ENCODE measurements at regions of chr18 and their contacts with region 1.

Region 1: DNA sequence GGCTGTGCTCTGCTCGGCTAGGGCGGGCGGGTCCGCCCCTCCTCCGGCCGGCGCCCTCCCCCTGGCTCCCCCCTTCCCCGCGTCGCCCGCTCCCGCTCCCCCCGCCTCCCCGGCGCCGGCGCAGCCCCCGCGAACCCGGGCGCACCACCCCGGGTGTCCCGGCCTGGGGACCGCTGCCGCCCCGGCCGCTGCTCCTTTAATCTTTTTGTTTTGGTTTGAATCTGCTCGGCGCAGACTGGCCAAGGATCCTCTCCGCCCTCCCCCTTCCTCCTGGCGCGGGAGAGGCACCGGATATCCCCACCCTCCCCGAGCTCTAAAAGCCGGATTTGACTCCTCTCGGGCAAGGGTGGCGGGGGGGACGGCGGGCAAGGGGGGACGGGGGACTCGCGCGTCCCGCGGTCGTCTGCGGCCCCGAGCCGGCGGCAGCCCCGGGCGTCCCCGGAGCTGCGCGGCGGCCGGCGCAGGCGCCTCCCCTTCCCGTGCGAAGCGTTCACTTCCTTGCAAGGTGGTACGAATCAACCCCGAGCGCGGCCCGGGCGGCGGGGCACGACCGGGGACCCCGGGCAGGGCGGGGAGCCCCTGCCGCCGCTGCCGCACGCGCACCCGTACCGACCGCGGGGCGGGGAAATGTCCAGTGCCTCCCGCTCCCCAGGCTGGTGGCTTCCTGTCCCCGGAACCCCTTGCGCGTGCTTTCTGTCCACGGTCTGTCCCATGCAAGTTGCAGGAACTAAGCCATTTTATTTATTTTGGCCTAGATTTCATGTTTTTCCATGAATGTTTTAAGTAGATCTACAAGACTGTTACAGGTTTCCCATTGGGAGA is at the start of gene PTGR3:
- DNase-seq: peak; percentile 91
- H3K4me3 Mint-ChIP-seq: peak within 1 kb of the TSS; percentile 99
- H3K27ac Mint-ChIP-seq: peak within 1 kb of the TSS; percentile 98
- H3K4me1 Mint-ChIP-seq: peaks cover 56% of the 10 kb centered on the region
- H3K27me3 Mint-ChIP-seq: no peaks in the 10 kb centered on the region
- total RNA-seq, gene PTGR3: 29.6 to 30.2 TPM

Region 2: DNA sequence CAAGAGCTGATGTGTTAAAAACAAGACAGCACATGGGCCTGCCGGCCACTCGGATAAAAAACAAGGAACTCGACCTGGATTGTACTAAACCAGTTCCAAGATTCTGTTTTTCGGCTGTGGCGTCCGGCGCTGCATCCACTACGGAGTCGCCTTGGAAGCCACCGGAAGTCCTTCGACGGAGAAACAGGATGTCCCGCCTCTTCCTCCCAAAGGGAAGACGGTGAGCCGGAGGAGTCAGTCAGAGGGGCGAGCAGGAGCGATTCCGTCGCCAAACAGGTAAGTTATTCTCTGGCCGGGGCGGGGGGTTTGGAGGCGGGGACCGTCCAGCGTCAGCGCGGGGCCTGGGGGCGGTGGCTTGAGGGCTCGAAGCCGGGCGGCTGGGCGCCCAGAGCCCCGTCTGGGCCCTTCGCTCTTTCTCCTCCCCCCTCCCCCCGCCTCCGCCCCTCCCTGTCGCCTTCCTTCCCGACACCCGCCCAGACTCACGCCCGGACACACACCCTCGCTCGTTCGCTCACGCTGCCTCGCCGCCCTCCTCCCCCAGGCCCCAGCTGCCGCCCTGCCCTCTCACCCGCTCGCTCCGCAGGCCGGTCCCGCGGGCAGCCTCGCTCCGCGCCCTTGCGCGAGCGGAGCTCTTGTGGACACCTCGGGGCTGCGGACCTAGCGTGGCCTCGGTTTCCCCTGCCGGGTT is 611.5 kb before region 1 on chr18 and contains the start of gene ZNF407:
- CTCF ChIA-PET with region 1: no interaction called
- POLR2A ChIA-PET with region 1: interaction called, 5 read pairs
- intact Hi-C with region 1: loop called (anchors 1 kb)
- DNase-seq: peak; percentile 91
- H3K4me3 Mint-ChIP-seq: peak within 1 kb of the TSS; percentile 96
- H3K27ac Mint-ChIP-seq: peak within 1 kb of the TSS; percentile 99
- H3K4me1 Mint-ChIP-seq: peaks cover 41% of the 10 kb centered on the region
- H3K27me3 Mint-ChIP-seq: no peaks in the 10 kb centered on the region
- total RNA-seq, gene ZNF407: 10.0 to 10.5 TPM

Region 3: GRCh38 chr18:74994502-74995419 is 214.6 kb before region 1 on chr18:
- CTCF ChIA-PET with region 1: no interaction called
- POLR2A ChIA-PET with region 1: interaction called, 4 read pairs
- intact Hi-C with region 1: loop called (anchors 1 kb)
- DNase-seq: peak; percentile 46
- H3K4me3 Mint-ChIP-seq: peak overlapping the region; percentile 64
- H3K27ac Mint-ChIP-seq: peak overlapping the region; percentile 89
- H3K4me1 Mint-ChIP-seq: peaks cover 46% of the 10 kb centered on the region
- H3K27me3 Mint-ChIP-seq: no peaks in the 10 kb centered on the region

Region 4: GRCh38 chr18:75247611-75248421 is 38.5 kb after region 1 on chr18:
- CTCF ChIA-PET with region 1: interaction called, 3 read pairs
- POLR2A ChIA-PET with region 1: interaction called, 7 read pairs
- intact Hi-C with region 1: loop called (anchors 1 kb)
- DNase-seq: no peak
- H3K4me3 Mint-ChIP-seq: peak overlapping the region; percentile 77
- H3K27ac Mint-ChIP-seq: peak overlapping the region; percentile 87
- H3K4me1 Mint-ChIP-seq: peaks cover 58% of the 10 kb centered on the region
- H3K27me3 Mint-ChIP-seq: no peaks in the 10 kb centered on the region

Region 5: GRCh38 chr18:75280427-75281280 is 71.3 kb after region 1 on chr18:
- CTCF ChIA-PET with region 1: no interaction called
- POLR2A ChIA-PET with region 1: no interaction called
- intact Hi-C with region 1: no loop called
- DNase-seq: no peak
- H3K4me3 Mint-ChIP-seq: no peak overlapping the region
- H3K27ac Mint-ChIP-seq: peak overlapping the region; percentile 35
- H3K4me1 Mint-ChIP-seq: peaks cover 24% of the 10 kb centered on the region
- H3K27me3 Mint-ChIP-seq: no peaks in the 10 kb centered on the region

Region 6: DNA sequence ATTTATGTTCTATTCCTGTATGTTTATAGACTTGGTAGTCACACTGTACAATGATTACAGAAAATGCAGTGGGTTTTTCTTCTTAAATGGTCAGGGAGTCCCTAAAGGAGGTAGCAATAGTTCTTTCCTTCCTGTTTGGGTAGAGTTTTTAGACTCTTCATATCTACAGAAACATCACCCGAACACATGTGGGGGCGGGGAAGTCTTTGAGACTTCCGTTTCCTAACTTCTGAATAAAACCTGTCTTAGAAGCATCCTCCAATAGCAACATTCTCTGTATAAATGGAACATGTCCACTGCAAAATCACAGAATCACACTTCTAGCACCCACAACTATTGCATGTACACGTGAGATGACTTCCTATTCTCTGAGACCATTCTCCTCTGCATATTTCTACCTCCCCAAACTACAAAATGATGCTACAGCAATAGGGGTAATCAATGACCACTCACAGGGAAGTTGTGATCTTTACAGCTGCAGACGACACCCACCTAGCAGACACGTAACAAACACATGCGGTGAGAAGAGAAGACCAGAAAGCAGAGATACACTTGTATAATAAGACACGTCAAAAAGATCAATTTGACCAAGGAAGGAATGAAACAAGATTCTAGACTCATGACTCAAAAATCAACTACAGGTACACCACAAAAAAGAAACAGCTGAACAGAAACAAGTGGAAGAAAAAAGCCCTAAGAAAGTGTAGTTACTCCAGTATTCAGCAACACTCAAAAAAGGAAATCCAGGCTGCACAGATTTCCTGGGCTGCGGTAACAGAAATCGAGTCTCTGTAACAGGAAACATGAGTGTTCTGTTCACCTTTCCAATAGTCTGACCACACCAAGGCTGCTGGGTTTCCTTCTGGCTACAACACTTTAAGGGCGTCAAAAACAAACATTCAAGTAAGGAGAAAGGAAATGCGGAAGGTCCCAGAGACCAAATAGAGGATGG is 1165.3 kb after region 1 on chr18:
- CTCF ChIA-PET with region 1: no interaction called
- POLR2A ChIA-PET with region 1: no interaction called
- intact Hi-C with region 1: loop called (anchors 1 kb)
- DNase-seq: peak; percentile 75
- H3K4me3 Mint-ChIP-seq: no peak overlapping the region
- H3K27ac Mint-ChIP-seq: peak overlapping the region; percentile 64
- H3K4me1 Mint-ChIP-seq: peaks cover 50% of the 10 kb centered on the region
- H3K27me3 Mint-ChIP-seq: peaks cover 1% of the 10 kb centered on the region

Measured in activated CD4-positive, alpha-beta memory T cell treated with anti-CD3 and anti-CD28 coated beads for 36 hours (primary cell).